ENCODE measurements at regions of chr9 and their contacts with region 1.

Region 1: GRCh38 chr9:31783491-31783890 is 601.0 kb upstream of the ACO1 start:
- DNase-seq: no peak
- H3K4me3 ChIP-seq: no peak overlapping the region
- H3K27ac ChIP-seq: no peak overlapping the region
- H3K4me1 ChIP-seq: no peaks in the 10 kb centered on the region
- H3K27me3 ChIP-seq: no peaks in the 10 kb centered on the region
- CTCF ChIP-seq: no peak
- POLR2A ChIP-seq: no peak

Region 2: DNA sequence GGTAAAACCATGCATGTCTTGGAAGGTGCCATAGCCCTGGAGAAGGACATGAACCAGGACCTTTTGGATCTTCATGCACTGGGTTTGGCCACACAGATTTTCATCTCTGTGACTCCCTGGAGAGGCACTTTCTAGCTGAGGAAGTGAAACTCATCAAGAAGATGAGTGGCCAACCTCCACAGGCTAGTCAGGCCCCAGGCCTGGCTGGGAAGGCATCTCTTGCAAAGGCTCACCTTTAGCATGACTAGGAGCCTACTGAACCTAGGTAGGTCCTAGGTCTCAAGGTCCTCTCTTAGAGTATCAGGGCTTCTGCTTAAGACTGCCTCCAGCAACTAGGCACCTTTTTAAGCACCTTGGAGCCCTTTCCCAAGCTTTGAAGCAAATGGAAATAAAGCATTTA is 847.8 kb before region 1 on chr9:
- intact Hi-C with region 1: loop called (anchors 5 kb)
- DNase-seq: peak in 1 of 2 donors; percentile 25
- H3K4me3 ChIP-seq: no peak overlapping the region
- H3K27ac ChIP-seq: no peak overlapping the region
- H3K4me1 ChIP-seq: no peaks in the 10 kb centered on the region
- H3K27me3 ChIP-seq: no peaks in the 10 kb centered on the region
- CTCF ChIP-seq: no peak
- POLR2A ChIP-seq: no peak